Activated T-helper 1 cell treated with anti-CD3 and anti-CD28 coated beads, Interleukin-12 subunit alpha, Interleukin-12 subunit beta, Interleukin-2, Interleukin-4 antibody, amounts not matched to agents 30 ng/mL and 10 ng/mL and 1 ng/mL, durations not matched to agents 14 hours and 24 hours and 36 hours (primary cell): ENCODE measurements at regions of chr6 and their contacts with region 1.

Region 1: DNA sequence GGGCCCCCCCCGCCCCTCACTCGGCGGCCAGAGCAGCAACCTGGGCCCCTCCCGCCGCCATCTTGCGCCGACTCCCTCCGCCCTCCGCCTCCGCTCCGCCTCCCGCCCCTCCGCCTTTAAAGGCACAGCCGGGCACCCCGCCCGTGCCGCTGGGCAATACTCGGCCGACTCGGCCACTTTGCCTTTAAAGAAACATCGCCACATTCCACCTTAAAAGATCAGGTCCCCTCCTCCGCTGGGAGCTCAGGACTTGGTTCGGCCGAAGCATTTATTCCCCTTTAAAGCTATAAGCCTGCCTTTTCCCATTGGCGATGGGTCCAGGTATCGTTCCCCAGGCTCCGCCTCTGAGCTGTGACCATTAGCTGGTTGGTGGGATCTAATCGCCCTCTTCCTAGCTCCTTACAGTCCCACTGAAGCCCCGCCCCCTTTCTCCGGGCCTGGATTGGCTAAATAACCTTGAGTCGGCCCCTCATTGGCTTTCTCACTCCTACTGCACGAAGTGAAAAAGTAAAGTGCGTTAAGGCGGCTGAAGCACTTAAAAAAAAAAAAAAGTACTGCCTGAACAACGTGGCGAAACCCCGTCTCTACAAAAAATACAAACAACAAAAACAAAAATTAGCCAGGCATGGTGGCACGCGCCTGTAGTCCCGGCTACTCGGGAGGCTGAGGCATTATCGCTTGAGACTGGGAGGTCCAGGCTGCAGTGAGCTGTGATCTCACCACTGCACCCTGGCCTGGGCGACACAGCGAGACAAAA is at the start of gene ZBTB22:
- DNase-seq: peak; percentile 92
- H3K4me3 Mint-ChIP-seq: peak within 1 kb of the TSS; percentile 97
- H3K27ac Mint-ChIP-seq: peak within 1 kb of the TSS; percentile 94
- H3K4me1 Mint-ChIP-seq: peaks cover 74% of the 10 kb centered on the region
- H3K27me3 Mint-ChIP-seq: no peaks in the 10 kb centered on the region
- total RNA-seq, gene ZBTB22: 12.5 and 14.7 TPM in 2 replicates

Region 2: DNA sequence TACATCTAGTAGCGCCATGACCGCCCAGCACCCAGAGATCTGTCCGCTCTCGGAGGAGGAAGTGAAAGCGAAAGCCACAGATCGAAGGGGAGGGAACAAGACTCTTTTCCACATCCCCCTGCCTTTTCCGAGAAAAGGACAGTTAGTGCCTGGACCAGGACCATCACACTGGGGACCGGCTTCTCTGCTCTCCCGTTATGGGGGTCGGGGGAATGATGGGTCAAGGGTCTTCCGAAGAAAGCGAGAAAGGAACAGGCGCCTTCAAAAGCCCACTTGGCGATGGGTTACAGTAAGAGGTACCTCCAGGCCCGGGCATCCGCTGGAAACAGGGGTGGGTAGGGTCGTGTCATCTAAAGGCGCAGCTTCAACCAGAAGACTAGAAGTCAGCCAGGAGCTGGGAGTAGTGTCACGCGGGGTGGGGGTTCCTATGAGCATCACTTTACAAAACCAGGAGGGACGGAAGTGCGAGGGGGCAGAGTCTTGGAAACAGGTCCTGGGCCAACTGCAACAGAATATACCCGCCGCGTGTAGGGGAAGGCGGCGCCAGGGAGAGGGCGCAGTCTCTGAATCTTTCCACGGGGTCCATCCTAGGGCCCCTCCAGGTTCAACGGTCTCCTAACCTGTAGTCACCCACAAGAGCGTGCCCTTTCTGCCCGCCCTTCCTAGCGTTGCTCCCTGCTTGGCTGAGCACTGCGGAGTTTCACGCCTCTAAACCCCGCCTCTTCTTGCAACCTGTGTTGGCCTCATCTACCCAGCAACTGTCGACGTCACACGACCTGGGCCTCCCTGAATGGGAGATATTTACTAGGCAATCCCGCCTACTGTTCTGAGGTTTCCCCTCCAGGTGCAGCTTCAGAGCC is 473.6 kb before region 1 on chr6 and contains the start of gene PSMB8:
- intact Hi-C with region 1: loop called (anchors 5 kb)
- DNase-seq: peak; percentile 96
- H3K4me3 Mint-ChIP-seq: peak within 1 kb of the TSS; percentile 93
- H3K27ac Mint-ChIP-seq: peak within 1 kb of the TSS; percentile 98
- H3K4me1 Mint-ChIP-seq: peaks cover 82% of the 10 kb centered on the region
- H3K27me3 Mint-ChIP-seq: no peaks in the 10 kb centered on the region
- total RNA-seq, gene PSMB8: 353 and 358 TPM in 2 replicates

Region 3: DNA sequence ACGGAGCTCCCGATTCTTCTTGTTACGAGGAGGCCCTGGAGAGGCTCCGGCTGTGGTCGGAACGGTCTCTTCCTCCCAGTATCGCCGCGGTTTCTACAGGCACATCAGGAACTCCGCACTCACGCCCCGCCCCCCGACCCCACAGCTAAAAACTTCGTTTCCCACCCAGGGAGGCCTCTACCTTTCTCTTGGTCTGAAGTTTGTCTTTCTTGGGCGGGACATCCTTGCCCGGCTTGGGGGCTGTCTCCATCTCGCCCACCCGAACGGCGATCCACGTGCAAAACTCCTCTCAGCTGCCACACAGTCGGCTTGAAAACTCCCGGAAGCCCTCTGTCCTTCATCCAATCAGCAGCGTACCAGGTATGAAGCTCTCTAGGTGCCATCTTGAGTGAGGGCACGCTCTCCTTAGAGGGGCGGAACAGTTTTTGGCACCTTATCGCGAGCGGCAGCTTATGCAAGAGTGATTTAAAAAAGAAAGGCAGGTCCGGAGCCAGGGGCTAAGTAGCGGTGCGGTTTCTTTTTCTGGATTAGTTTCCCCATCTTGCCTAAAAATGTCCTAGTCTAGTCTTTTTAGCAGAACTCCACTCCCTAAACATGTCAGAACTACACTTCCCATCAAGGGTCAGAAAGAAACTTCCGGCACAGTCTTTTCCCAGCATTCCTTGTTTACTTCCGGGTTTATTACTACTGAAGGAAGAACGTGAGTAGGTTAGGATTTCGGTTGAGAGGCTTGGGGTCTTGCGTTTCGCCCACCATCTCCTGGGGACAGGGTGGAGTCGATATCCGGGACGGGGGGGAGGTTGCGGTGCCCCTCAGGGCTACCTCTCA is 28.7 kb before region 1 on chr6 and contains the starts of genes PFDN6 and WDR46:
- intact Hi-C with region 1: loop called (anchors 1 kb)
- DNase-seq: peak; percentile 83
- H3K4me3 Mint-ChIP-seq: peak within 1 kb of the TSS; percentile 98
- H3K27ac Mint-ChIP-seq: peak within 1 kb of the TSS; percentile 86
- H3K4me1 Mint-ChIP-seq: peaks cover 31% of the 10 kb centered on the region
- H3K27me3 Mint-ChIP-seq: no peaks in the 10 kb centered on the region
- total RNA-seq, gene PFDN6: 122 and 126 TPM in 2 replicates
- total RNA-seq, gene WDR46: 113 and 123 TPM in 2 replicates

Region 4: GRCh38 chr6:33344701-33345697 is 27.2 kb after region 1 on chr6:
- intact Hi-C with region 1: loop called (anchors 1 kb)
- DNase-seq: peak; percentile 59
- H3K4me3 Mint-ChIP-seq: peak overlapping the region; percentile 77
- H3K27ac Mint-ChIP-seq: peak overlapping the region; percentile 82
- H3K4me1 Mint-ChIP-seq: peaks cover 26% of the 10 kb centered on the region
- H3K27me3 Mint-ChIP-seq: peaks cover 9% of the 10 kb centered on the region

Region 5: GRCh38 chr6:33417903-33418689 is 100.2 kb after region 1 on chr6 and contains the start of gene CUTA:
- intact Hi-C with region 1: loop called (anchors 1 kb)
- DNase-seq: peak; percentile 98
- H3K4me3 Mint-ChIP-seq: peak within 1 kb of the TSS; percentile 95
- H3K27ac Mint-ChIP-seq: peak within 1 kb of the TSS; percentile 96
- H3K4me1 Mint-ChIP-seq: peaks cover 70% of the 10 kb centered on the region
- H3K27me3 Mint-ChIP-seq: no peaks in the 10 kb centered on the region
- total RNA-seq, gene CUTA: 131 and 137 TPM in 2 replicates

Region 6: DNA sequence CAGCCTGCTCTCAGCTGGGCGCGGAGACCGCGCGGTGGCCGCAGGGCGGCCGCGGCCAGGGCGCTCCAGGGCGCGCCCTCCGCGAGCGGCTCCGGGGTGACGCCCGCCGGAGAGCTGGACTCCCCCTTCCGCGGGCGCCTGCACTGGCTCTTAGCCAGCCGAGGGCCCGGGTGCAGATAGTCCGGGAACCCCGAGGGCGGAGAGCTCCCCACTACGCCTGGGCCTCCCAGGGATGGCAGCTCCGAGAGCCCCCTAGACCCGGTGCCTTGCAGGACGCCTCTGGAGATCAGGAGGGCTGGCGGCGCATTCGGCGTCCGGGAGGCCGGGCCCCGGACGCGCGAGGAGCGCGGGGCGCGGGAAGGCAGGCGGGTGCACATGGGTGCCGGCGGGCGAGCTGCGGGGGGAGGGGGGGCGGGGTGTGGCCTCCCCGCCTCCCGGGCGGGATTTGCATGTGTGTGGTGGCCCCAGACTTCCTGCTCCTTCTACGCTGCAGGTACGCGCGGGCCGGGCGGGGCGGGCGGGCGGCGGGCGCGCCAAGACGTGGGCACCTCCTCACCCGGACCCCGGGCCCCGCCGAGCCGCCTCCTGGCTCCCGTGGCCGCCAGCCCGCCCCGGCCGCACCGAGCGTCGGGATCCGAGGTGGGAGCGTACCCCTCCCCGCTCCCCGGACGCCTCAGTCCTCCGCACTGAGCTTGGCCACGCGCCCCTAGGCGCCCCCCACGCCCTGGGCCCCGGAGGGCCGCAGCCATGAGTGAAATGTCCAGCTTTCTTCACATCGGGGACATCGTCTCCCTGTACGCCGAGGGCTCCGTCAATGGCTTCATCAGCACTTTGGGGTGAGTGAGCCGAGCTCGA is 303.2 kb after region 1 on chr6 and contains the start of gene ITPR3:
- intact Hi-C with region 1: loop called (anchors 5 kb)
- DNase-seq: peak; percentile 68
- H3K4me3 Mint-ChIP-seq: peak within 1 kb of the TSS; percentile 96
- H3K27ac Mint-ChIP-seq: peak within 1 kb of the TSS; percentile 90
- H3K4me1 Mint-ChIP-seq: peaks cover 49% of the 10 kb centered on the region
- H3K27me3 Mint-ChIP-seq: no peaks in the 10 kb centered on the region
- total RNA-seq, gene ITPR3: 42.7 and 42.9 TPM in 2 replicates